K562 (cell line): ENCODE measurements at regions of chr4 and their contacts with region 1.

Region 1: GRCh38 chr4:142126890-142127497 is 490.6 kb downstream of the IL15 start:
- DNase-seq: peak; percentile 13 to 56 (median 32)
- ATAC-seq: peak; percentile 72
- H3K4me3 ChIP-seq: no peak overlapping the region
- H3K27ac ChIP-seq: no peak overlapping the region
- H3K4me1 ChIP-seq: no peaks in the 10 kb centered on the region
- H3K27me3 ChIP-seq: no peaks in the 10 kb centered on the region
- CTCF ChIP-seq: peak; percentile 49 to 65 (median 59); a peak in 5 of 6 replicates
- EP300 ChIP-seq: no peak
- POLR2A ChIP-seq: no peak
- RAD21 ChIP-seq: peak; percentile 59 to 69

Region 2: DNA sequence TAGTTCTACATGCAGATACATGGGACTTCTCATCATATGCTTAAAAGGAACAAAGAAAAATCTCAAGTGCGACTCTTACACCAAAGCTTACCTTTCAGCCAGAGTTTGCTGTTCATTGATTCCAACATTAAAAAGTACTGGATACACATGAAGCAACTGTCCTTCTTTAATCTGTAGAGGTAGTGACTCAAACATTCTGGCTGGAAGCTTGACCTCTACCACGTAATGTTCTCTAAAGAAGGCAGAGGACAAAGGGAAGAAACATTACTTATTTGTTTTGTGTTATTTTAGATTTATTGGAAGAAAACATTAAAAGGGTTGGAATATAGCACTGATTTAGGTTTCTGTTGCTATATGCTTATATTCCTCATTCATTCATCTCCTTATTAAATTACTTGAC is 14.5 kb before region 1 on chr4:
- CTCF ChIA-PET with region 1: no interaction called
- POLR2A ChIA-PET with region 1: no interaction called
- in situ Hi-C with region 1: no loop called
- intact Hi-C with region 1: no loop called
- DNase-seq: no peak
- ATAC-seq: no peak
- H3K4me3 ChIP-seq: no peak overlapping the region
- H3K27ac ChIP-seq: no peak overlapping the region
- H3K4me1 ChIP-seq: no peaks in the 10 kb centered on the region
- H3K27me3 ChIP-seq: no peaks in the 10 kb centered on the region
- CTCF ChIP-seq: no peak
- EP300 ChIP-seq: no peak
- POLR2A ChIP-seq: no peak
- RAD21 ChIP-seq: no peak

Region 3: DNA sequence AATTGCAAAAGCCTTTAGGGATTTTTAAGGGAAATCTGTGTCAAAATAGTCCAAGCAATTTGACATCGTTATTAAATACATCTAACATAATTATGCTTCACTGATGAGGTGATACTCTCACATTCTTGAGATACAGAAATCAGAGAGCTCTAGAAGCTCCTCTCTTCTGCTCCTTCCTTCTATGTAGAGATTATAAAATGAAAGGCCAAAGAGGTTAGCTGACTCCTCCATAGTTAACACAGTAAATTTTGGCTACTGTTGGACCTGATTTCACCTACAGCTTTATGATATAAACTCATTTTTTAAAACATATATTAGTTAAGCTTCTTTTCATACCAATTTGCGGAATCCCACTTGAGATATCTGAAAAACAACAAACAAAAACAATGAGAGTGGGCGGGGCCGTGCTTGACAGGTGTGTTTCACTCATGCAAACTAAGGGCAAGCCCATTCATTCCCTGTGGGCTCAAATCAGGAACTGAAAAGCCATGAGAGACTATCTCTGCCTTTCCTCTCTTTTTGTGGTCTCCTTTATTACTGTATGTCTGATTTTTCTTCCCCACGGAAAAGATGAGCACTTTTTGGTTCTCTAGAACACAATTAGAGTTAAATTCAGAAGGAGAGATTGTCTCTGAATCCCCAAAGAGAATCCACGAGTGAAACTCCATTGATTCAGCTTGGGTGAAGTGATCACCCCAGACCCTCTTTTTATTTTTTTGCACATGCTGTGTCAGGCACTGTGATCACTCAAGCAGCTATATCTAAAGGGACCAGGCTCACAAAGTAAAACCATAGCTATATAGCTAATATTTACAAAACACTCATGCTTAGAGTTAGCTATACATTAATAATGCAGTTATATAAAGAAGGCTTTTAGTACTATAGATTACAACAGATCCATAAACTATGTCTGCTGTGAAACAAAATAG is 75.7 kb after region 1 on chr4:
- CTCF ChIA-PET with region 1: no interaction called
- POLR2A ChIA-PET with region 1: no interaction called
- in situ Hi-C with region 1: no loop called
- intact Hi-C with region 1: no loop called
- DNase-seq: no peak
- ATAC-seq: no peak
- H3K4me3 ChIP-seq: no peak overlapping the region
- H3K27ac ChIP-seq: no peak overlapping the region
- H3K4me1 ChIP-seq: no peaks in the 10 kb centered on the region
- H3K27me3 ChIP-seq: no peaks in the 10 kb centered on the region
- CTCF ChIP-seq: no peak
- EP300 ChIP-seq: no peak
- POLR2A ChIP-seq: no peak
- RAD21 ChIP-seq: no peak

Region 4: DNA sequence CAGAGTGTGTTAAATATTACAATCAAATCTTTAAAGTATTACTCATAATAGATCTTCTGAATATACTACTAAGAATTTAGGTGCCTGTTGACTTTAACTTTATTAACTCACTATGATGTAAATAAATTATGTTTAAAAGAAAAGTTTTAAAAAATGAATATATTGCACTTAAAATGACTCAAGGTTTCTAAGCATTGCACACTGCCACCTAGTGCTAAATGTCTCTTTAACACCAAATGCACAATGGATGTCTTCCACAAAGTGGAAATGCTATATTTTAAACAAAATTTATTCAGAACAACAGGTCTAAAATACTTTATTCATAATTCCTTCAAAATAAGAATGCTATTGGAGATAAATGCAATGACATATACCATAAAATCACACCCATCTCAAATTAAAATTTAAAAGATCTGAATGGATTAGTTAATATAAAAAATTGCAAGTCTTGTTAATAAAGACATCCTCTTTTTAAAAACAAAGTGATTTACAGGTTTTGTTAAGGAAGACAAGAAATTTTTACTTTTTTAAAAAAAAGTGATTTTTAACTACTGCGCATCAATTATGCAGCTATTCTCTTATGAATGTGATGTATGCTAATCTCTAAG is 713.6 kb after region 1 on chr4:
- CTCF ChIA-PET with region 1: no interaction called
- POLR2A ChIA-PET with region 1: no interaction called
- in situ Hi-C with region 1: no loop called
- intact Hi-C with region 1: loop called (anchors 5 kb)
- DNase-seq: peak in 1 of 4 experiments; percentile 16
- ATAC-seq: no peak
- H3K4me3 ChIP-seq: no peak overlapping the region
- H3K27ac ChIP-seq: no peak overlapping the region
- H3K4me1 ChIP-seq: no peaks in the 10 kb centered on the region
- H3K27me3 ChIP-seq: no peaks in the 10 kb centered on the region
- CTCF ChIP-seq: peak in 1 of 3 experiments; percentile 46; a peak in 2 of 6 replicates
- EP300 ChIP-seq: no peak
- POLR2A ChIP-seq: no peak
- RAD21 ChIP-seq: peak; percentile 20 to 30; a peak in 3 of 4 replicates

Region 5: DNA sequence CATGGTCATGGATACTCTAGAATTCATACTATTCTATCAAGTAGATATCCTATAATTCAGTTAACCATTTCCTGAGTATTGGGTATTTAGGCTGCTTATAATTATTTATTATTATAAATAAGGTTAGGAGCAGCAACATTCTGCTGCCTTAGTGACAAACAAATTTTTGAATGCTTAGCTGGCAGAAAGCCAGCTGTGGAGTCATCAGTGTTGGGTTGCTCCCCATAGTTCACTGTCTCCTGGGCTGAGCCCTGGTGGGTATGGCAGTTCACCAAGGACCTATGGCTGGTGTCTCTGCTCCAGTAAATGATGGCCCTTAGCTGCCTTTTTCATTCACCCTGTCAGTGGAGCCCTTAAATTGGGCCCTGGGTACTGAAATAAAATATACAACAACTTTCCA is 1448.3 kb after region 1 on chr4:
- CTCF ChIA-PET with region 1: no interaction called
- POLR2A ChIA-PET with region 1: no interaction called
- in situ Hi-C with region 1: no loop called
- intact Hi-C with region 1: loop called (anchors 10 kb)
- DNase-seq: peak in 1 of 4 experiments; percentile 10
- ATAC-seq: no peak
- H3K4me3 ChIP-seq: no peak overlapping the region
- H3K27ac ChIP-seq: no peak overlapping the region
- H3K4me1 ChIP-seq: no peaks in the 10 kb centered on the region
- H3K27me3 ChIP-seq: peaks cover 3 to 11% of the 10 kb centered on the region in 2 experiments; a peak in 3 of 5 replicates
- CTCF ChIP-seq: no peak
- EP300 ChIP-seq: no peak
- POLR2A ChIP-seq: no peak
- RAD21 ChIP-seq: no peak